Stomach (tissue), 19 donors: ENCODE measurements at regions of chr4 and their contacts with region 1.

Region 1: GRCh38 chr4:88818631-88819470 is 121.2 kb upstream of the NAP1L5 start:
- DNase-seq: peak; percentile 57 to 80
- H3K4me3 ChIP-seq: no peak overlapping the region
- H3K27ac ChIP-seq: peak overlapping the region in 3 of 5 donors; percentile 91 to 94 (median 92)
- H3K4me1 ChIP-seq: peaks cover 24 to 78% (median 49%) of the 10 kb centered on the region in 4 donors
- H3K27me3 ChIP-seq: no peaks in the 10 kb centered on the region
- CTCF ChIP-seq: peak in 5 of 7 experiments; percentile 24 to 65 (median 50)
- EP300 ChIP-seq: no peak
- POLR2A ChIP-seq: no peak

Region 2: GRCh38 chr4:89039730-89040338 is 221.0 kb after region 1 on chr4:
- intact Hi-C with region 1: loop called (anchors 10 kb)
- DNase-seq: no peak
- H3K4me3 ChIP-seq: no peak overlapping the region
- H3K27ac ChIP-seq: no peak overlapping the region
- H3K4me1 ChIP-seq: no peaks in the 10 kb centered on the region
- H3K27me3 ChIP-seq: no peaks in the 10 kb centered on the region
- CTCF ChIP-seq: no peak
- EP300 ChIP-seq: no peak
- POLR2A ChIP-seq: no peak